Aorta (tissue), 5 donors: ENCODE measurements at regions of chr12 and their contacts with region 1.

Region 1: GRCh38 chr12:88044035-88044434 is 14.8 kb upstream of the C12orf50 start:
- DNase-seq: no peak
- ATAC-seq: no peak
- H3K4me3 ChIP-seq: no peak overlapping the region
- H3K27ac ChIP-seq: no peak overlapping the region
- H3K4me1 ChIP-seq: no peaks in the 10 kb centered on the region
- H3K27me3 ChIP-seq: no peaks in the 10 kb centered on the region

Region 2: GRCh38 chr12:88122666-88123065 is 78.6 kb after region 1 on chr12:
- intact Hi-C with region 1: loop called in 1 of 2 experiments (anchors 10 kb)
- DNase-seq: no peak
- ATAC-seq: no peak
- H3K4me3 ChIP-seq: no peak overlapping the region
- H3K27ac ChIP-seq: no peak overlapping the region
- H3K4me1 ChIP-seq: no peaks in the 10 kb centered on the region
- H3K27me3 ChIP-seq: no peaks in the 10 kb centered on the region